ENCODE measurements at regions of chr10 and their contacts with region 1.

Region 1: GRCh38 chr10:123582084-123582989 is 83.8 kb upstream of the GPR26 start:
- DNase-seq: peak; percentile 88
- ATAC-seq: peak; percentile 74

Region 2: GRCh38 chr10:123967396-123968243 is 385.3 kb after region 1 on chr10:
- intact Hi-C with region 1: loop called (anchors 2 kb)
- DNase-seq: peak; percentile 89
- ATAC-seq: peak; percentile 90

Measured in sciatic nerve (tissue), 2 donors.